ENCODE measurements at regions of chr2 and their contacts with region 1.

Region 1: GRCh38 chr2:146041274-146041910 is 1521.5 kb upstream of the ZEB2 start:
- DNase-seq: no peak

Region 2: DNA sequence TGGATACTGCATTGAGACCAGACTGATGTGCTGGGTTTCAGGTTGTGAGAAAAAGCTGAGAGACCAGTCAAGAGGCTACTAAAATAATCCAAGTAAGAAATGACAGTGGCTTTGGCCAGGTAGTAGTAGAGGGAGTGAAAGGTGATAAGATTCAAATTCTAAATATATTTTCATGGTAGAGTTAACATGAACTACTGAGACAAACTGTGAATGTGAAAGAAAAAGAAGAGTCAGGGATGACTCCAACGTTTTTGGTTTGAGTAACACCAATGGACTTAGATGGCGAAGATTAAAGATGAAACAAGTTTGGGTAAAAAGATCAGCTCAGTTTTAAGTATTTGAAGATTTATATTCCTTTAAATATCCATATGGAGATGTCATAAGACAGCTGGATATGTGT is 1730.9 kb before region 1 on chr2:
- intact Hi-C with region 1: loop called in 1 of 2 experiments (anchors 5 kb)
- DNase-seq: no peak

Region 3: GRCh38 chr2:146135245-146135644 is 93.9 kb after region 1 on chr2:
- intact Hi-C with region 1: no loop called
- DNase-seq: no peak